ENCODE measurements at regions of chrX and their contacts with region 1.

Region 1: GRCh38 chrX:72003811-72004750 is 93.4 kb downstream of the NHSL2 start:
- DNase-seq: peak; percentile 33 to 48
- ATAC-seq: peak; percentile 80 to 91 (median 85)
- H3K4me3 ChIP-seq: peak overlapping the region in 2 of 10 donors; percentile 5 to 11
- H3K27ac ChIP-seq: peak overlapping the region in 7 of 10 donors; percentile 14 to 74 (median 67)
- H3K4me1 ChIP-seq: peaks cover 0 to 20% (median 8%) of the 10 kb centered on the region in 9 donors
- H3K27me3 ChIP-seq: peaks cover 0 to 55% (median 0%) of the 10 kb centered on the region in 7 donors
- CTCF ChIP-seq: peak in 4 of 9 donors; percentile 14 to 32 (median 23)

Region 2: GRCh38 chrX:71618303-71618721 is 385.8 kb before region 1 on chrX and contains the start of gene CXCR3:
- intact Hi-C with region 1: no loop called
- DNase-seq: peak; percentile 23 to 38
- ATAC-seq: peak in 3 of 8 donors; percentile 10 to 55 (median 29)
- H3K4me3 ChIP-seq: peak within 1 kb of the TSS in 1 of 10 donors; percentile 38
- H3K27ac ChIP-seq: peak within 1 kb of the TSS in 1 of 10 donors; percentile 50
- H3K4me1 ChIP-seq: peaks cover 0 to 29% (median 13%) of the 10 kb centered on the region in 9 donors
- H3K27me3 ChIP-seq: no peaks in the 10 kb centered on the region
- CTCF ChIP-seq: no peak
- total RNA-seq, gene CXCR3: 0.17 to 2.7 (median 0.38) TPM in 4 of 10 donors, not detected in the others

Region 3: DNA sequence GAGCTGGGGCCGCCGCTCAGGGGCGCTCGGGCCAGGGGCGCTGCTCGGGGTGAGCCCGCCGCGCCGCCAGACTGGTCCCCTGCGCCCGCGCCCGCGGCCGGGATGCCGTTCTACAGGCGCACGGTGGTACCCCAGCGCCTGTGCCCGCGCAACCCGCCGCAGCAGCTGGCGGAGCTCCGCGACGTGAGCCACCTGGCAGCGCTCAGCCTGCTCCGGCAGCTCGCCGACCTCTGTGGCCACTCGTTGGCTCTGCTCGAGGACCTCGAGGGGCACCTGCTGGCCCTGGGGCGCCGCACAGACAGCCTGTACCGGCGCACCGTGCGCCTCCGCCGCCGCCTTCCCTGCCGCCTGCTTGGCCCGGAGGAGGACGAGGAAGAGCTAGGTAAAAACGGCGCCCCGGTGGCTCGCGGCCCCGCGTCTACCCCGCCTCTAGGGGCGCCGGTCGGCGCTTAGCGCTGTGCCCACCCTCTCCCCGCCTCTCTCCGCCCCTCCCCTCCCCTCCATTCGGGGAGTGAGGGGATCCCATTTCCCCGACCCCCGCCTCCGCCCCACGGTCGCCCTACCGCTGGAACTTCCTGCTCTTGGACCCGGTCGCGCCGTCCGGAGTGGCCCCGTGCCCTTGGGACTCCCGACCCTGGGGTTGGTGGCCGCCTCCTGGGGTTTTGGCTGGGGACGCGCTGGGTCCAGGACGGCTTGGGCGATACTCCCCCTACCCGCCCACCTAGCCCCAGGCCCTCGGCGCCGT is 92.9 kb before region 1 on chrX:
- intact Hi-C with region 1: loop called in 2 of 10 experiments (anchors 5 to 10 kb)
- DNase-seq: peak in 1 of 2 donors; percentile 15
- ATAC-seq: peak; percentile 19 to 75 (median 60)
- H3K4me3 ChIP-seq: peak overlapping the region; percentile 3 to 55 (median 48)
- H3K27ac ChIP-seq: peak overlapping the region in 8 of 10 donors; percentile 17 to 72 (median 44)
- H3K4me1 ChIP-seq: peaks cover 0 to 5% (median 0%) of the 10 kb centered on the region in 9 donors
- H3K27me3 ChIP-seq: peaks cover 0 to 99% (median 13%) of the 10 kb centered on the region in 7 donors
- CTCF ChIP-seq: peak in 6 of 9 donors; percentile 11 to 40 (median 28)

Region 4: GRCh38 chrX:72181178-72182125 is 177.4 kb after region 1 on chrX and contains the start of gene PIN4:
- intact Hi-C with region 1: loop called in 1 of 10 experiments (anchors 5 kb)
- DNase-seq: peak; percentile 83 to 94
- ATAC-seq: peak; percentile 97 to 99 (median 98)
- H3K4me3 ChIP-seq: peak within 1 kb of the TSS; percentile 52 to 84 (median 72)
- H3K27ac ChIP-seq: peak within 1 kb of the TSS; percentile 69 to 87 (median 84)
- H3K4me1 ChIP-seq: peaks cover 0 to 17% (median 11%) of the 10 kb centered on the region in 9 donors
- H3K27me3 ChIP-seq: no peaks in the 10 kb centered on the region
- CTCF ChIP-seq: no peak
- total RNA-seq, gene PIN4: 6.9 to 15.6 (median 10.5) TPM

Region 5: DNA sequence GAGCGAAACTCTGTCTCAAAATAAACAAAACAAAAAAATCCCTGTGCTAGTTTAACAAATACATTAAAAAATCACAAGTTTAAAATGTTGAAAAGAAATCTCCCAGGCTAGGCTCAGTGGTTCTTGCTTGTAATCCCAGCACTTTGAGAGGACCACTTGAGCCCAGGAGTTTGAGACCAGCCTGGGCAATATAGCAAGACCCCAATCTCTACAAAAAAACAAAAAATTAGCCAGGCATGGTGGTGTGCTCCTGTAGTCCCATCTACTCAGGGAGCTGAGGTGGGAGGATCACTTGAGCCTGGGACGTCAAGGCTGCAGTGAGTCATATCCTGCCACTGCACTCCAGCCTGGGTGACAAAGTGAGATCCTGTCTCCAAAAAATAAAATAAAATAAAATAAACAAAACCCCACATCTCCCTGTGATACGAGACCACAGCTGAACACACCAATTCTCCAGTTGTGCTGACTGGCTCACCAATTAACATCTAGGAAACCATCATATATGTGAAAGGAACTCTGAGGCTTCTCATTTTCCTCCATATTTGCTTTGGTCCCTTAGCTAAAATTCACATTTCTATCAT is 265.7 kb after region 1 on chrX:
- intact Hi-C with region 1: loop called in 2 of 10 experiments (anchors 10 kb)
- DNase-seq: peak in 1 of 2 donors; percentile 4
- ATAC-seq: peak in 5 of 8 donors; percentile 48 to 66 (median 61)
- H3K4me3 ChIP-seq: no peak overlapping the region
- H3K27ac ChIP-seq: peak overlapping the region in 2 of 10 donors; percentile 31 to 50
- H3K4me1 ChIP-seq: peaks cover 0 to 36% (median under 1%) of the 10 kb centered on the region in 9 donors
- H3K27me3 ChIP-seq: no peaks in the 10 kb centered on the region
- CTCF ChIP-seq: no peak